HepG2 (cell line): ENCODE measurements at regions of chr2 and their contacts with region 1.

Region 1: DNA sequence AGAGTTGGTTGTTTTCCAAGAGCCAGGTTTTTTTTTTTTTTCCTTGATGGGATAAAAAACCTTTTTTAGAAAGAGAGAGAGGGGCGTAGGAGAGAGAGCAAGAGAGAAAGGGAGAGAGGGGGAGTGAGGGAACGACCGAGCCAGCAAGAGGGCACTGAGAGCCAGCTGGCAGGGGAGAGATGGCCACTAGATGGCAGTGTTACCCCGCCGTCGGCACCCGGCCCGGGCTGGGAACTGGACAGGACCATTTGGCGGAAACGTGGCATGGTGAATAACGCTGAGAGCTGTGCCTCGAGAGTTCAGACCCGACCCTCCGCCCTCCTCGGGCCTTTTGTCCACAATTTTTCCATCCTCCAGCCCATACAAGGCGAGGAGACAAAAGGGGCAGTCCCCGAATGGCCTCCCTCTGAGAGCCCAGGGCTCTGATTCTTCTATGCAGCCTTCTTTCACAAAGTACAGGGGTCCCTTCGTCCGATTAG is 286.7 kb upstream of the VRK2 start:
- DNase-seq: peak; percentile 63
- ATAC-seq: peak; percentile 100
- H3K4me3 ChIP-seq: peak overlapping the region in 1 of 3 experiments; percentile 54; a peak in 2 of 6 replicates
- H3K27ac ChIP-seq: no peak overlapping the region
- H3K4me1 ChIP-seq: peaks cover 15% of the 10 kb centered on the region
- H3K27me3 ChIP-seq: peaks cover 0 to 6% of the 10 kb centered on the region in 2 experiments; a peak in 1 of 5 replicates
- CTCF ChIP-seq: peak; percentile 98
- EP300 ChIP-seq: no peak
- POLR2A ChIP-seq: no peak
- RAD21 ChIP-seq: peak; percentile 97

Region 2: GRCh38 chr2:57711991-57712390 is 47.9 kb before region 1 on chr2:
- CTCF ChIA-PET with region 1: no interaction called
- POLR2A ChIA-PET with region 1: no interaction called
- in situ Hi-C with region 1: no loop called
- intact Hi-C with region 1: no loop called
- DNase-seq: no peak
- ATAC-seq: no peak
- H3K4me3 ChIP-seq: no peak overlapping the region
- H3K27ac ChIP-seq: no peak overlapping the region
- H3K4me1 ChIP-seq: no peaks in the 10 kb centered on the region
- H3K27me3 ChIP-seq: no peaks in the 10 kb centered on the region
- CTCF ChIP-seq: no peak
- EP300 ChIP-seq: no peak
- POLR2A ChIP-seq: no peak
- RAD21 ChIP-seq: no peak

Region 3: DNA sequence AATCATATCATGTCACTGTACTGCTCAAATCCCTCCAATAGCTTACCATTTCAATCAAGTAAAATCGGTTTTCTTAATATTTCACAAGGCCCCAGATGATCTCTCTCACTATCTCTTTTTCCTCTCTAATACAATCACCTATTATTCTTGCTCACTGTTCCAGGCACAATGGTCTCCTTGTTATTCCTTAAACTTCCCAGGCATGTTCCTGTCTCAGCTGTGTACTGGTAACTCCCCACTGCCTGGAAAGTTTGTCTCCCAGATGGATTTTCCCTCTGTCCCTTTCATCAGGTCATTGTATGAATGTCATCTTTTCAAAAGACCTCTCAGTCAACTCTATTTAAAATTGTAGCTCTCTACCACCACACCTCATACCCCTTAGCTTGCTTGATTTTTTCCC is 512.0 kb after region 1 on chr2:
- CTCF ChIA-PET with region 1: no interaction called
- POLR2A ChIA-PET with region 1: no interaction called
- in situ Hi-C with region 1: no loop called
- intact Hi-C with region 1: no loop called
- DNase-seq: peak; percentile 7
- ATAC-seq: no peak
- H3K4me3 ChIP-seq: no peak overlapping the region
- H3K27ac ChIP-seq: no peak overlapping the region
- H3K4me1 ChIP-seq: peaks cover 4% of the 10 kb centered on the region; the same call in 1 of the 2 replicates
- H3K27me3 ChIP-seq: no peaks in the 10 kb centered on the region; a peak in 1 of 5 replicates
- CTCF ChIP-seq: no peak
- EP300 ChIP-seq: no peak
- POLR2A ChIP-seq: no peak
- RAD21 ChIP-seq: no peak

Region 4: DNA sequence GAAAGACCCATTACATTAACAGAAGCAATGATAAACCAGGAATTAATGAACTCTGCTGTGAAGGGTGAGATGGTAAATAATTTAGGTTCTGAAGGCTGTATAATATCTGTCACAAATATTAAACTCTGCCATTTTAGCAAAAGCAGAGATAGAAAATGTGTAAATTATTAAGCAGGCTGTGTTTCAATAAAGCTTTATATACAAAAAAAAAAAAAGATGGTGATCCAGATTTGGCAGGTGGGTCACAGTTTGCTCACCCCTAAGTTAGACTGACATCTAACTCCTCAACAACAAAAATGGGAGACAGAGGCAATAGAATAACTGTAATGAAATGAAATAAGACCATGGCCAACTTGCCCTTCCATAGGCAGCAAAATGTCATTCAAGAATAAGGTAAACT is 638.5 kb after region 1 on chr2:
- CTCF ChIA-PET with region 1: no interaction called
- POLR2A ChIA-PET with region 1: no interaction called
- in situ Hi-C with region 1: no loop called
- intact Hi-C with region 1: no loop called
- DNase-seq: no peak
- ATAC-seq: no peak
- H3K4me3 ChIP-seq: no peak overlapping the region
- H3K27ac ChIP-seq: no peak overlapping the region
- H3K4me1 ChIP-seq: no peaks in the 10 kb centered on the region
- H3K27me3 ChIP-seq: no peaks in the 10 kb centered on the region
- CTCF ChIP-seq: no peak
- EP300 ChIP-seq: no peak
- POLR2A ChIP-seq: no peak
- RAD21 ChIP-seq: no peak

Region 5: DNA sequence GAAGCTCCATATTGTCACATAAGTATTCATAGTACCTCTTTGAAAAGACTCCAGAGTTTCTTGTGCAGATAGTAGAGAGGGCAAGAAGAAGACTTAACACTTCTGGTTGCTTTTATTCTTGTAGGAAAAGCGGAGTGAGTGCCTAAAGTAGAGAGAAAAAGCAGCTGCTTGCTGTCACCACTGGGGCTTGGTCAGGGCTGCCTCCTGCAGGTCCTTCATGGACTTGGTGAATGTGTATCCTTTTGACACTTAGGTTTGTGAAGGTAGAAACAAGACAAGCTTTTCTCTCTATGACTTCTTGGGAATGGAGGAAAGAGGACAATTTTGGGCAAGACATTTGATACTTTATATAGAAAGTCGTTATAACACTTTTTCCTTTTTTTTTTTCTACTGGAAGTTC is 794.1 kb after region 1 on chr2:
- CTCF ChIA-PET with region 1: no interaction called
- POLR2A ChIA-PET with region 1: no interaction called
- in situ Hi-C with region 1: no loop called
- intact Hi-C with region 1: loop called (anchors 1 kb)
- DNase-seq: peak; percentile 10
- ATAC-seq: peak; percentile 76
- H3K4me3 ChIP-seq: no peak overlapping the region
- H3K27ac ChIP-seq: no peak overlapping the region
- H3K4me1 ChIP-seq: no peaks in the 10 kb centered on the region
- H3K27me3 ChIP-seq: no peaks in the 10 kb centered on the region
- CTCF ChIP-seq: peak; percentile 26; the same call in 1 of the 2 replicates
- EP300 ChIP-seq: no peak
- POLR2A ChIP-seq: no peak
- RAD21 ChIP-seq: no peak

Region 6: GRCh38 chr2:58871469-58872142 is 1111.7 kb after region 1 on chr2:
- CTCF ChIA-PET with region 1: no interaction called
- POLR2A ChIA-PET with region 1: no interaction called
- in situ Hi-C with region 1: no loop called
- intact Hi-C with region 1: loop called (anchors 10 kb)
- DNase-seq: no peak
- ATAC-seq: peak; percentile 38; the same call in 1 of the 3 replicates
- H3K4me3 ChIP-seq: no peak overlapping the region
- H3K27ac ChIP-seq: no peak overlapping the region
- H3K4me1 ChIP-seq: peaks cover 11% of the 10 kb centered on the region; the same call in 1 of the 2 replicates
- H3K27me3 ChIP-seq: no peaks in the 10 kb centered on the region
- CTCF ChIP-seq: no peak
- EP300 ChIP-seq: no peak
- POLR2A ChIP-seq: no peak
- RAD21 ChIP-seq: no peak